ENCODE measurements at regions of chr15 and their contacts with region 1.

Region 1: DNA sequence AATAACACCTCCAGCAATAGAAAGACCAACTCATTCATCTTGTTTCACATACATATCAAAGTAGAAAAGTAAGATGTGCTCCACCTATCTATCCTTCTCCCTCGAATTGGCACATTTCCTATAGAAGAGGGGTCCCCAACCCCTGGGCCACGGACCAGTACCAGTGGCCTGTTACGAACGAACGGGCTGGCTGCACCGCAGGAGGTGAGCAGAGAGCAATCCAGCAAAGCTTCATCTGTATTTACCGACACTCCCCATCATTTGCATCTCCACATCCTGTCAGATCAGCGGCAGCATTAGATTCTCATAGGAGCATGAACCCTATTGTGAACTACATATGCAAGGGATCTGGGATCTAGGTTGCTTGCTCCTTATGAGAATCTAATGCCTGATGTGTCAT is 95.0 kb upstream of the CGNL1 start:
- DNase-seq: no peak
- H3K4me3 ChIP-seq: no peak overlapping the region
- H3K27ac ChIP-seq: no peak overlapping the region
- H3K4me1 ChIP-seq: no peaks in the 10 kb centered on the region
- H3K27me3 ChIP-seq: no peaks in the 10 kb centered on the region
- CTCF ChIP-seq: no peak

Region 2: GRCh38 chr15:56919031-56919608 is 362.2 kb before region 1 on chr15:
- intact Hi-C with region 1: no loop called
- DNase-seq: peak; percentile 57
- H3K4me3 ChIP-seq: peak overlapping the region; percentile 91
- H3K27ac ChIP-seq: peak overlapping the region; percentile 93
- H3K4me1 ChIP-seq: no peaks in the 10 kb centered on the region
- H3K27me3 ChIP-seq: no peaks in the 10 kb centered on the region
- CTCF ChIP-seq: no peak

Region 3: DNA sequence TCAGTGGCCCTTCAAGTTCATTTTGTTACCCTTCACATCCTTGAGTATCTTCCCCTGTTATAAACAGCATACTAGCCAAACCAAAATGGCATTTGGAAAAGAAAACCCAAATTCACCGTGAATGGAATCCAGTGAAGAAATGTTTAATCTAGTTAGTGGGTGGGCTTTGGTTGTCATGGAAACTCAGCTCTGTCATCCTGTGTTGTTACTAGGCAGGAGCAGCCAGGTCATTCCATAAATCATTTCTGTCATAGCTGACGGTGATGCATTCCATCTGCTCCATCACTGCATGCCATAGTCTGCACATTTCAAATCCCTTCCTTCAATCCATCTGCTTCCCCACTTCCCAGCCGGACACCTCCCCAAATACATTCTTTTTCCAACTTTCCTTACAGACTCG is 45.4 kb before region 1 on chr15:
- intact Hi-C with region 1: loop called (anchors 10 kb)
- DNase-seq: no peak
- H3K4me3 ChIP-seq: no peak overlapping the region
- H3K27ac ChIP-seq: no peak overlapping the region
- H3K4me1 ChIP-seq: no peaks in the 10 kb centered on the region
- H3K27me3 ChIP-seq: no peaks in the 10 kb centered on the region
- CTCF ChIP-seq: no peak